Caco-2 (cell line): ENCODE measurements at regions of chr12 and their contacts with region 1.

Region 1: DNA sequence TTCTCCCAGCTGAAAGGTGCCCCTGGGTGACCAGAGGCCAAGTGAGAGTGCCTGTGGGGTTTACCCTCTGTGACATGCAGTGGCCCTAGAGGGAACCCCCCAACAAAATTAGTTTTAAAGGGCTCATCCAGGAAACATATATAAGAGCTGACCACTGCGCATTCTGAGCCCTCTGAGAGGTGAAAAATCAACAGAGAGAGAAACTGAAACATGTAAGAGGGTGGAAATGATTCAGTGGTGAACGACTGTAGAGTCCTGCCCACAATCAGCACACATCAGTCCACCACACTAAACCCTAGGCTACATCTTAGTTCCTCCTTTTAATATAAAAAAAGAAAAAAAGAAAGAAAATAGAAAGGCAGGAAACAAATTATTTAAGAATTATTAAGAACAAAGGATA is 21.0 kb upstream of the ACSM4 start:
- DNase-seq: no peak
- H3K4me3 ChIP-seq: no peak overlapping the region
- H3K4me3 Mint-ChIP-seq: no peak overlapping the region
- H3K27ac Mint-ChIP-seq: no peak overlapping the region
- H3K4me1 ChIP-seq: 0 out of 2 replicates have a peak, but pooled peaks cover 6% of the 10 kb centered on the region
- H3K4me1 Mint-ChIP-seq: peaks cover 6% of the 10 kb centered on the region
- H3K27me3 ChIP-seq: no peaks in the 10 kb centered on the region; the same call in 1 of the 2 replicates
- H3K27me3 Mint-ChIP-seq: peaks cover 12% of the 10 kb centered on the region
- CTCF ChIP-seq: no peak

Region 2: GRCh38 chr12:7411343-7411742 is 128.5 kb after region 1 on chr12:
- CTCF ChIA-PET with region 1: no interaction called
- POLR2A ChIA-PET with region 1: no interaction called
- intact Hi-C with region 1: no loop called
- DNase-seq: no peak
- H3K4me3 ChIP-seq: no peak overlapping the region
- H3K4me3 Mint-ChIP-seq: no peak overlapping the region
- H3K27ac Mint-ChIP-seq: no peak overlapping the region
- H3K4me1 ChIP-seq: no peaks in the 10 kb centered on the region
- H3K4me1 Mint-ChIP-seq: no peaks in the 10 kb centered on the region
- H3K27me3 ChIP-seq: no peaks in the 10 kb centered on the region
- H3K27me3 Mint-ChIP-seq: peaks cover 27% of the 10 kb centered on the region
- CTCF ChIP-seq: no peak

Region 3: GRCh38 chr12:7434670-7435069 is 151.8 kb after region 1 on chr12:
- CTCF ChIA-PET with region 1: no interaction called
- POLR2A ChIA-PET with region 1: interaction called, 11 read pairs
- intact Hi-C with region 1: no loop called
- DNase-seq: no peak
- H3K4me3 ChIP-seq: no peak overlapping the region
- H3K4me3 Mint-ChIP-seq: no peak overlapping the region
- H3K27ac Mint-ChIP-seq: no peak overlapping the region
- H3K4me1 ChIP-seq: no peaks in the 10 kb centered on the region
- H3K4me1 Mint-ChIP-seq: peaks cover 18% of the 10 kb centered on the region
- H3K27me3 ChIP-seq: no peaks in the 10 kb centered on the region
- H3K27me3 Mint-ChIP-seq: peaks cover 16% of the 10 kb centered on the region
- CTCF ChIP-seq: no peak